Naive thymus-derived CD4-positive, alpha-beta T cell (primary cell): ENCODE measurements at regions of chr10 and their contacts with region 1.

Region 1: DNA sequence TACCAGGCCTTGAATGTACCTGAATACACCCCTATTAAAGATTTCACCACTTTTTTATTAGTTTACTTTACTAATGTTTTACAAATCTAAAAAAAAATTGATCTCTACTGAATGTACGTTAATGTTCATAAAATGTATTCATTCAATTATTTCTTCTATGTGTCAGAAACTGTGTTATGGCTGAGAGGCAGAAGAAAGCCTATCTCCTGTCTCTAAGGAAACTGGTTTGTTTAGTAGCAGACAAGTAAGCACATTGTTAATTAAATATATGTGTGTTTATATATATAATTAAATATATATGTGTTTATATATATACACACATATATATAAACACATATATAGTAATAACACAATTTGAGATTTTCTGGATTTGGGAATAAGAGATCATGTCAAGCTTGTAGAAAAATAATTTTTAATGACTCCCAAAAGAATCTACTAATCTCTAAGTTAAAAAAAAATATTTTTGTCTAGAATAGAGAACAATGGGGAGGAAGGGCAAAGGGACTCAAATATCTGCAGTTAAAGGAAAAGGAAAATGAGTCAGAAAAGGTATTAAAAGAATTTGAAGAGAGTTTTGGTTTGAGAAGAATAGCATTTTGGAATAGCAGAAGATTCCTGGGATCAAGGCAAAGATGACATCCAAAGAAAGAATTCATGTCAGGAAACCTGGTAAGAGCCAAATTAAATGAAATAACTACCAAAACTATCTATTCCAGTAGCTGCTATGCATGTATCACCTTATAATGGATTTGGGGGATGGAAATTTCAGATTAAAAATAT is 92.1 kb downstream of the CH25H start:
- DNase-seq: no peak
- ATAC-seq: no peak
- H3K4me3 ChIP-seq: no peak overlapping the region
- H3K4me3 Mint-ChIP-seq: no peak overlapping the region
- H3K27ac ChIP-seq: no peak overlapping the region
- H3K27ac Mint-ChIP-seq: no peak overlapping the region
- H3K4me1 ChIP-seq: no peaks in the 10 kb centered on the region
- H3K4me1 Mint-ChIP-seq: peaks cover 0 to 2% (median 0%) of the 10 kb centered on the region in 7 donors
- H3K27me3 ChIP-seq: no peaks in the 10 kb centered on the region
- H3K27me3 Mint-ChIP-seq: peaks cover 18 to 49% (median 29%) of the 10 kb centered on the region in 5 donors

Region 2: DNA sequence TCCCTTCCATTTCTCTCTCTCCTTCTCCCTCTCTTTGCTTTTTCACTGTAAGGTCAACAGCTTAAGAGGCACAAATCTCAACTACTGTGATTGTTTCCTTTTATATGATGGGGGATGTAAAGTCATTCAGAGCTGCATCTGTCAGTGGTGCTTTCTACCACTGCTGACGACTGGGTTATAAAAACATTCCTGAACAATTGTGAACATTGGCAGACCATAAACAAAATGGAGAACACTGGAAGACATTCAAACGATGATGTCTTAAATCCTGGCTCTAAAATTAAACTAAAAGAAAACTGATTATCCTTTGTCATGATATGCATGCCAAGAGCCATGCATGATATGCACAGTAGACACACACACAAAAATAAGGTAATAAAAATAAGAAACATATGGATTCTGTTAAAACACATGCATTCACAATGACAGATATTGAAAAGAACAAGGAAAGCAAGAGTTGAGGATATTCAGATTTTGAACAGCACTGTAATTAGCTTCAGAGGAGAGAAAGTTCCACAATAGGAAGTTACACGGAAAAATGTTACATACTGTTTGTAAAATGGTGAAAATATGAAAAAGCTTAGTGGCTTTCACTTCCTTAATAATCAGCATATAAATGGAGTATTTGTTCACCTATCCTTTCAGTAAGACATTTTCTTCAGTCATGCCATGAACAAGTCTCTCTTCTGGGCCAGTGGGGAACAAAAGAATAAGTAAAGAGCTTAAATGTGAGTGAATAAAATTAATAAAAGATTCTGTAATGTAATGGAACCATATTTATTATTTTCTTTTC is 621.1 kb before region 1 on chr10:
- CTCF ChIA-PET with region 1: no interaction called
- POLR2A ChIA-PET with region 1: no interaction called
- intact Hi-C with region 1: no loop called
- DNase-seq: no peak
- ATAC-seq: no peak
- H3K4me3 ChIP-seq: no peak overlapping the region
- H3K4me3 Mint-ChIP-seq: no peak overlapping the region
- H3K27ac ChIP-seq: no peak overlapping the region
- H3K27ac Mint-ChIP-seq: no peak overlapping the region
- H3K4me1 ChIP-seq: no peaks in the 10 kb centered on the region
- H3K4me1 Mint-ChIP-seq: peaks cover 6 to 39% (median 24%) of the 10 kb centered on the region in 7 donors
- H3K27me3 ChIP-seq: no peaks in the 10 kb centered on the region
- H3K27me3 Mint-ChIP-seq: peaks cover 0 to 5% (median 0%) of the 10 kb centered on the region in 5 donors

Region 3: GRCh38 chr10:89029785-89030437 is 85.1 kb before region 1 on chr10:
- CTCF ChIA-PET with region 1: no interaction called
- POLR2A ChIA-PET with region 1: no interaction called
- intact Hi-C with region 1: loop called in 1 of 2 experiments (anchors 5 kb)
- DNase-seq: peak; percentile 37 to 68 (median 53)
- ATAC-seq: peak; percentile 85
- H3K4me3 ChIP-seq: no peak overlapping the region
- H3K4me3 Mint-ChIP-seq: peak overlapping the region in 1 of 10 donors; percentile 30
- H3K27ac ChIP-seq: no peak overlapping the region
- H3K27ac Mint-ChIP-seq: no peak overlapping the region
- H3K4me1 ChIP-seq: no peaks in the 10 kb centered on the region
- H3K4me1 Mint-ChIP-seq: peaks cover 0 to 31% (median 0%) of the 10 kb centered on the region in 7 donors
- H3K27me3 ChIP-seq: no peaks in the 10 kb centered on the region
- H3K27me3 Mint-ChIP-seq: no peaks in the 10 kb centered on the region